ENCODE measurements at regions of chrX and their contacts with region 1.

Region 1: DNA sequence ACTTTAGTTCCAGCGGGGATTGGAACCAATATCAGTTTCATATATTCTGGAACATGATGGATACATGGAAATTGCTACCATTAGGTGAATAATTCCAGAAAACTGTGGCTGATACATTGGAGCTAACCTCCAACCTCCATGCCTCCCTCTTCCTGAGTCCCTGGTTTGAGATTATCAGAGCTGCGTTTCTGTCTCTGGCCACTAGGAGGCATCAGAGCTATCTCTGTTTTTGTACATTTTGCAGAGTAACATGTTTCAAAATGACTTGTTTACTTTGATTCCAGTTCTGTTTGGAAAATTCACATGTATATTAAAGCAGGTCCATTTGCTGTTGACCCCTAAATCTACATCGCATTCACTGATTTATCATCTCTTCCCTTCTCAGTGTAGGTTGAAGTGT is 2.4 kb upstream of the RAB40AL start:
- DNase-seq: peak; percentile 7
- H3K4me3 ChIP-seq: no peak overlapping the region
- H3K27ac ChIP-seq: no peak overlapping the region
- H3K4me1 ChIP-seq: no peaks in the 10 kb centered on the region
- H3K27me3 ChIP-seq: peaks cover 3% of the 10 kb centered on the region
- CTCF ChIP-seq: peak; percentile 71 to 92

Region 2: DNA sequence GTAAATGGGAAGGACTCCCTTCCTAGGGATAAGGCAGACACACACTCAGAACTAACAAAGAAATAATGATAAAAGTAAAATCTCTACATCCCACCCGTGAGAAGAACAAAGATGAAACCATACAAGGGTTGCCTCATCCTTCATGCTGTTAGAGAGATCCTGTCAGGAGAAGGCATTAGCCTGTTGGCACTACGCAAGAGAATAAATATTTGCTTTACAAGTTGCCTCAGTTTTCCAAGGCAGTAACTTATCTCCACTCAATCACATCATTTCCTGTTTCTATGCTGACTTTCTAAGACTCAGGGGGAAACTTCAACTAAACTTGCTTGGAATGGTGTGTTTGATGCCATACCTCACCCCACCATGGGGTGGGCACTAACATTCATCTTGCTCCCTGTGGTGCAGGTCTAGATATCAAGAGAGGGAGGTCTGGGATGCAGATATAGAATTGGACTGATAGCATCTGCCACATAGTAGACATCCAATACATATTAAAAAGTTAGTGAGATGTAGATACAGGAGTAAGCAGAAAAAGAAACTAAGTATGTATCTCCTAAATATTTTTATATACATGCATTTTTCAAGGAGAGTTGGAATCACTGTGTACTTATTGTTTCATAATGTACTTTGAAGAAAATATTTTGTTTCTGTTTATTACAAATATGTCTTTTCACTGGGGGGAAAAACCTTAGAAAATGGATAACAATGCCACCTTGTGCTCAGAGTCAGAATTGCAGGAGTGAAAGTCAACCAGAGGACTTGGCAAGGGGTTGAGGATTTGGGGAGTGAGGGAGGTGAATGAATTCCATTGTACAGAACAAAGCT is 223.1 kb after region 1 on chrX:
- CTCF ChIA-PET with region 1: no interaction called
- dilution Hi-C with region 1: loop called (anchors 25 kb)
- in situ Hi-C with region 1: no loop called
- intact Hi-C with region 1: no loop called
- DNase-seq: peak; percentile 22
- H3K4me3 ChIP-seq: no peak overlapping the region
- H3K27ac ChIP-seq: no peak overlapping the region
- H3K4me1 ChIP-seq: peaks cover 13% of the 10 kb centered on the region
- H3K27me3 ChIP-seq: no peaks in the 10 kb centered on the region
- CTCF ChIP-seq: peak; percentile 71 to 82